ENCODE measurements at regions of chr2 and their contacts with region 1.

Region 1: GRCh38 chr2:180980106-180980942 is at the start of gene UBE2E3:
- DNase-seq: peak; percentile 42
- H3K4me3 ChIP-seq: peak within 1 kb of the TSS; percentile 82
- H3K27ac ChIP-seq: peak within 1 kb of the TSS; percentile 83
- H3K27me3 ChIP-seq: no peaks in the 10 kb centered on the region
- CTCF ChIP-seq: peak; percentile 70
- polyA plus RNA-seq, gene UBE2E3: 124 and 127 TPM in 2 replicates

Region 2: DNA sequence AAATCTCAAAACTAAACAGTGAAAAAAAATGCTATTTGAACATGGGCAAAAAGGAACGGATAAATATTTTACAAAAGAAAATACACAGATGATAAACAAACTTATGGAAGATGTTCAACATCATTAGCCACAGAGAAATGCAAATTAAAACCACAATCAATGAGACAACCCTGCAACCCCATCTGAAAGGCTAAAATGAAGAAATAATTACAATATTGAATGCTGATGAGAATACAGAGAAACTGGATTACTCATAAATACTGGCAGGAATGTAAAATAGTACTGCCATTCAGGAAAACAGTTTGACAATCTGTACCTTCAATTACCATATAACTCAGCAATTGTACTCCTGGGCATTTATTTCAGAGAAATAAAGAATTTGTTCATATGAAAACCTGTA is 193.0 kb before region 1 on chr2:
- CTCF ChIA-PET with region 1: no interaction called
- POLR2A ChIA-PET with region 1: no interaction called
- DNase-seq: no peak
- H3K4me3 ChIP-seq: no peak overlapping the region
- H3K27ac ChIP-seq: no peak overlapping the region
- H3K27me3 ChIP-seq: no peaks in the 10 kb centered on the region
- CTCF ChIP-seq: no peak

Region 3: GRCh38 chr2:180907731-180908130 is 72.6 kb before region 1 on chr2:
- CTCF ChIA-PET with region 1: no interaction called
- POLR2A ChIA-PET with region 1: no interaction called
- DNase-seq: peak; percentile 26
- H3K4me3 ChIP-seq: no peak overlapping the region
- H3K27ac ChIP-seq: no peak overlapping the region
- H3K27me3 ChIP-seq: no peaks in the 10 kb centered on the region
- CTCF ChIP-seq: no peak

Region 4: DNA sequence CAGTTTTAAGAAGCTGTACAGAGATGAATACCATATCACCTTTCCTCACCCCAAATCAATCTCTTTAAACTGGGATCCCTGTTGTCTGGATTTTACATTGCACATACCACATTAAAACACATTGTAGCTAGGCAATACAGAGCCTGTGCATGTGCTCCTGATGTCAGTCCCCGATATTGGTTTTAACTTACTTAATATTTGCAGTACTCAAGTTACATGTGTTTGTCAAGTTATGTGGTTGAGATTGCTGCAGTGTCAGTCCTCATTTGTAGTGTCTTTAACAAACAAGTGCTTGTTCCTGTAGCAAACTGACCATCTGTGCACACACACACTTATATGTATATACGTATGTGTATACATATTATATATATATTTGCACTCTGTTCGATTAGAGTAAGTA is 10.3 kb before region 1 on chr2:
- CTCF ChIA-PET with region 1: interaction called, 18 read pairs
- POLR2A ChIA-PET with region 1: no interaction called
- DNase-seq: no peak
- H3K4me3 ChIP-seq: no peak overlapping the region
- H3K27ac ChIP-seq: no peak overlapping the region
- H3K27me3 ChIP-seq: no peaks in the 10 kb centered on the region
- CTCF ChIP-seq: no peak

Region 5: DNA sequence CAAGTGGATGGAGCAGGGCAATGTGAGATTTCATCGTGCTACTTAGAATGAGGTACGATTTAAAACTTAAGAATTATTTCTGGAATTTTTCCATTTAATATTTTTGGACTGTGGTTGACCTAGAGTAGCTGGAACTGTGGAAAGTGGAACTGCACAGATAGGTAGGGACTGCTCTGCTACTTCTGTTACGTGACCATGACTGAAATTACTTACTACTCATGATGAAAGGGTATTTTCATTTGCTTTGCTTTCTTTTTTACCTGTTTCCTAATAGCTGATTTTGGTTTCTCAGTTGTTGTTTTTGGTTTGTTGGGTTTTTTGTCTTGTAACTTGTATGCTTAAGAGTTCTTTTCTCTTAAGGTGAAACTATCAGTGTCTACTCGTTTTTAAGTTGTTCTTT is 11.5 kb after region 1 on chr2:
- CTCF ChIA-PET with region 1: interaction called, 13 read pairs
- POLR2A ChIA-PET with region 1: interaction called, 3 read pairs
- DNase-seq: no peak
- H3K4me3 ChIP-seq: no peak overlapping the region
- H3K27ac ChIP-seq: no peak overlapping the region
- H3K27me3 ChIP-seq: no peaks in the 10 kb centered on the region
- CTCF ChIP-seq: no peak

Region 6: DNA sequence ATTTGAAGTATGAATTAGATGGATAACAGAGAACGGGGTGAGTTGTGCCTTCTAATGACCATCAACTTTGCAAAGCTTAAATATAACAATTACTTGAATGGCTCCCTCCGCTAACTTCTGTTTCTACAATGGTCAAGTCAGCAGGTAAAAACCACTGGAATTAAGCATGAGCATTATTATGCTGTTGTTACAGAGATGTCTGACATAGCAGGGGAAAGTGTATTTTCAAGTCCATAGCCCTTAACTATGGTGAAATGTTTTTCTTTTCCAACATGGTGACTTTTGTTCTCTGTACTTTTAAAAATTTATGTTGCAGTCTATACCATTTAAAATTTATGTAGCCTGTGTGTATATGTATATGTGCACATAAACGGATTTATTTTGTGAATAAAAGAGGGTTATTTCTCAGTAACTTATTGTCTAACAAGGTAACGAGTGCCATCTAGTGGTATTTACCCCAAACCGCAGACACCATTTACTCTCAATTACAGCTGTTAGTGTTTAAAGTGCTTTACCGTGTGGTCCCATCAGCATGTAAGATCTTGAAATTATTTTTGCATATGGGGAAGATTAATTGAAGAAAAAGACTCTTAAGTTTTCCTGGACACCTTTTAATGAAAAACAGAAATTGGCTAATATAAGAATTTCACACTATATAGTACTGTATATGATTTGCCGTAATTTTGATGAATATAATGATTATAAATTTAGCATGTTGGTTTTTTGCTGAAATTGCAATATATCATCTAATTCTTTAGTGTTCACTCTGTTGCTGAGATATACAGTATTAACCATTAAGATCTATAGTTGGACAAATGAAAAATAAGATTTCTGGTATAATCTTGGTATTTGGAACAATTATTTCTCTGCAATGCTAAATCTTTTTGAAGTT is 78.3 kb after region 1 on chr2:
- CTCF ChIA-PET with region 1: interaction called, 10 read pairs
- POLR2A ChIA-PET with region 1: no interaction called
- DNase-seq: no peak
- H3K4me3 ChIP-seq: no peak overlapping the region
- H3K27ac ChIP-seq: no peak overlapping the region
- H3K27me3 ChIP-seq: no peaks in the 10 kb centered on the region
- CTCF ChIP-seq: peak; percentile 41

Measured in AG04450 (cell line).